SK-N-SH (cell line): ENCODE measurements at regions of chr2 and their contacts with region 1.

Region 1: DNA sequence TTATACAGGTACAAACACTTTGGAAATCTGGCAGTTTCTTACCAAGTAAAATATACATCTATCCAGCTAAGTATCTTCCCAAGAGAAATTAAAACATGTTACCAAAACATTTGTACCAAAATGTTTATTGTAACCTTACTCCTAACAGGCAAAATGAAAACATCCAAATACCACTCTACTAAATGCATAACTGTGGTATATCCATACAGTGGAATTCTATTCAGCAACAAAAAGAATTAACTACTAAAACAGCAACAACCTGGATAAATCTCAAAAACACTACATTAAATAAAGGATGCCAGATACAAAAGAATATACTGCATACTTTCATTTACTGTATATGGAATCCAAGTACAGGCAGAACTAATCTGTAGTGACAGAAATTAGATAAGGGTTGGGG is 51.1 kb downstream of the TLK1 start:
- DNase-seq: no peak
- H3K4me3 ChIP-seq: no peak overlapping the region
- H3K27ac ChIP-seq: no peak overlapping the region
- H3K4me1 ChIP-seq: no peaks in the 10 kb centered on the region
- H3K27me3 ChIP-seq: no peaks in the 10 kb centered on the region
- CTCF ChIP-seq: no peak
- EP300 ChIP-seq: no peak
- RAD21 ChIP-seq: no peak

Region 2: GRCh38 chr2:171086352-171087290 is 22.9 kb before region 1 on chr2:
- CTCF ChIA-PET with region 1: interaction called, 14 read pairs
- POLR2A ChIA-PET with region 1: no interaction called
- DNase-seq: peak; percentile 46
- H3K4me3 ChIP-seq: no peak overlapping the region
- H3K27ac ChIP-seq: no peak overlapping the region
- H3K4me1 ChIP-seq: peaks cover 0 to 4% of the 10 kb centered on the region in 2 experiments; a peak in 1 of 4 replicates
- H3K27me3 ChIP-seq: no peaks in the 10 kb centered on the region
- CTCF ChIP-seq: peak; percentile 69
- EP300 ChIP-seq: no peak
- RAD21 ChIP-seq: peak; percentile 46